Common myeloid progenitor, CD34-positive (primary cell): ENCODE measurements at regions of chr16 and their contacts with region 1.

Region 1: DNA sequence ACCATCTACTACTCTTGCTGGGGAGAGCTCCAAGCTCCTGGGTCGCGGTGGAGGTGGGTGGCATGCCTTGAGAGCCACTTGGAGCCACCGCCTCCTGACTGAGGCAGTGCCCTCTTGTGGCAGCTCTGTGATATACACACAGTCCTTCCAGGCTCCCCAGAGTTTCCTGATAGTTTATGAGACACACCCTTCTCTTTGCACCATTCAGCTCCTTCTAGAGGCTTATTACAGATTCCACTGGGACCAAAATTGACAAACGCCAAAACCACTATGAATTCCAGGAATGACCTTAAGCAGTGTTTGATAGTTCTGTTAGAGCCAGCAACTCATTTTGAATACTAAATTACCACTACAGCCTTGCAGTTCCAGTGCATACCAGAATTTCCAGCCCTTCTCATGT is 170.1 kb upstream of the CDH13 start:
- DNase-seq: peak; percentile 20 to 59 (median 34)
- H3K4me3 ChIP-seq: no peak overlapping the region
- H3K27ac ChIP-seq: no peak overlapping the region
- H3K4me1 ChIP-seq: no peaks in the 10 kb centered on the region
- H3K27me3 ChIP-seq: peaks cover 0 to 11% (median 0%) of the 10 kb centered on the region in 5 experiments

Region 2: DNA sequence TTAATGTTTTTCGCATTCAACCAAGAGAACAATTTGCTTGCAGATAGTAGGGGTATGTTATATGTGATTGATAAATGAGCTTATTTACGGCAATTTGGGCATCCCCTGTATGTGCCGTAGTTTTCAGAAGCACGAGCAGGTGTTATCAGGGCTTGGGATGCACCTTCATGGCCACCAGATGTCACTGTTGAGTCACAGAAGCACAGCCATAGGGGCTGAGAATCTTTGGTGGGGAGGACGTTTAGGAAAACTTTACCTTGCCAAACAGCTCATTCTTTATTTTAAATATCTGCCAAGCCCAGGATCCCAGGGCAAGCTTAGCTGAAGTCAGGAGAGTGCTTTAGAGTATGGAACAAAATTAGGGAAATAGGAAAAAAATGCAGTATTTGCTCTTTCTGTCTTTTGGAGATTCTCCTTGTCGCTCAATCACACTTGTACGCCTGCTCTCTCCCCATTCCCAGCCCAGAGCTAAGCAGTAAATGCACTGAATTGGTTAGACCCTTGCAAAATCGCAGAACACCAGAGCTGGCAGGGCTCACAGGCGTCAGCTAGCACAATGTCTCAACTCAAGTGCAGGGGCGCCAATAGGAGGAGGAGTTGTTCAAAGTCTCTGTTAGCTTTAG is 193.1 kb before region 1 on chr16:
- CTCF ChIA-PET with region 1: interaction called, 12 read pairs
- POLR2A ChIA-PET with region 1: no interaction called
- DNase-seq: peak; percentile 29 to 64 (median 45)
- H3K4me3 ChIP-seq: no peak overlapping the region
- H3K27ac ChIP-seq: no peak overlapping the region
- H3K4me1 ChIP-seq: no peaks in the 10 kb centered on the region
- H3K27me3 ChIP-seq: peaks cover 2 to 24% (median 6%) of the 10 kb centered on the region in 5 experiments

Region 3: DNA sequence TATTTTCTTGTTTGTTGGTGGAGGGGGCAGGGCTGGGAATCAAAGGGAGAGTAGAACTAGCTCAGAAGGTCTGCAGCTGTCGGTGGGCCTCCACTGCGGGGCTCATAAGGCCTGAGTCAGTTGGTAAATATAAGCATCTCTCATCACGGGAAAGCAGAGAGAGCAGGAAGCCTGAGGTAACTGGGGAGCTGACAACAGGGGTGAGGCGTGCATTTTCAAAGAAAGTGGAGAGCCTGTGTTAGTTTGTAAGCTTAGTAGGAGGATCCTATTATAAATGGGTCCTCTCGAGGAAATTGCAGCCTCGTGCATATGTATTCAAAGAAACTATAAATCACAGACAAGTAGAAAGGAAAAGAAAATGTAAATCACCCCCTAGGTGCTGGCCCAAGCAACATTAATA is 50.9 kb before region 1 on chr16:
- CTCF ChIA-PET with region 1: no interaction called
- POLR2A ChIA-PET with region 1: no interaction called
- DNase-seq: no peak
- H3K4me3 ChIP-seq: no peak overlapping the region
- H3K27ac ChIP-seq: no peak overlapping the region
- H3K4me1 ChIP-seq: no peaks in the 10 kb centered on the region
- H3K27me3 ChIP-seq: peaks cover 0 to 6% (median 0%) of the 10 kb centered on the region in 5 experiments